ENCODE measurements at regions of chr5 and their contacts with region 1.

Region 1: DNA sequence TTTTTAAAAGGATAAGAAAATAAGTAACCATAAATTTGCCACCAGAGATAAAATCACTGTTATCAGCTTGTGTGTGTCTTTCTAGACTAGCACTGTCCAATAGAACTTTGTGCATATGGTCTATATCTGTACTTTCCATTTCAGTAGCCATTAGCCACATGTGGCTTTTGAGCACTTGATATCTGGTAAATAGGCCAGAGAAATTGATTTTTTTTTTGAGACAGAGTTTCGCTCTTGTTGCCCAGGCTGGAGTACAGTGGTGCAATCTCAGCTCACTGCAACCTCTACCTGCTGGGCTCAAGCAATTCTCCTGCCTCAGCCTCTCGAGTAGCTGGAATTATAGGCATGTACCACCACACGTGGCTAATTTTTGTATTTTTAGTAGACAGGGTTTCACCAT is 17.8 kb downstream of the RBM27 start:
- DNase-seq: no peak
- ATAC-seq: no peak
- H3K4me3 Mint-ChIP-seq: no peak overlapping the region
- H3K27ac Mint-ChIP-seq: no peak overlapping the region
- H3K4me1 Mint-ChIP-seq: peaks cover 17% of the 10 kb centered on the region
- H3K27me3 Mint-ChIP-seq: no peaks in the 10 kb centered on the region

Region 2: GRCh38 chr5:145872486-145872885 is 348.7 kb before region 1 on chr5:
- CTCF ChIA-PET with region 1: no interaction called
- POLR2A ChIA-PET with region 1: no interaction called
- intact Hi-C with region 1: no loop called
- DNase-seq: no peak
- ATAC-seq: no peak
- H3K4me3 Mint-ChIP-seq: no peak overlapping the region
- H3K27ac Mint-ChIP-seq: no peak overlapping the region
- H3K4me1 Mint-ChIP-seq: no peaks in the 10 kb centered on the region
- H3K27me3 Mint-ChIP-seq: peaks cover 17% of the 10 kb centered on the region

Region 3: GRCh38 chr5:146273109-146273508 is 51.9 kb after region 1 on chr5:
- CTCF ChIA-PET with region 1: no interaction called
- POLR2A ChIA-PET with region 1: no interaction called
- intact Hi-C with region 1: loop called in 1 of 2 experiments (anchors 10 kb)
- DNase-seq: no peak
- ATAC-seq: no peak
- H3K4me3 Mint-ChIP-seq: no peak overlapping the region
- H3K27ac Mint-ChIP-seq: no peak overlapping the region
- H3K4me1 Mint-ChIP-seq: no peaks in the 10 kb centered on the region
- H3K27me3 Mint-ChIP-seq: no peaks in the 10 kb centered on the region

Region 4: GRCh38 chr5:146947181-146947941 is 726.1 kb after region 1 on chr5:
- CTCF ChIA-PET with region 1: no interaction called
- POLR2A ChIA-PET with region 1: no interaction called
- intact Hi-C with region 1: no loop called
- DNase-seq: peak; percentile 24
- ATAC-seq: peak; percentile 36
- H3K4me3 Mint-ChIP-seq: no peak overlapping the region
- H3K27ac Mint-ChIP-seq: no peak overlapping the region
- H3K4me1 Mint-ChIP-seq: peaks cover 3% of the 10 kb centered on the region
- H3K27me3 Mint-ChIP-seq: peaks cover 2% of the 10 kb centered on the region